Caco-2 (cell line): ENCODE measurements at regions of chr12 and their contacts with region 1.

Region 1: GRCh38 chr12:111953455-111953854 is 59.5 kb downstream of the TMEM116 start:
- DNase-seq: no peak
- H3K4me3 ChIP-seq: no peak overlapping the region
- H3K4me3 Mint-ChIP-seq: no peak overlapping the region
- H3K27ac Mint-ChIP-seq: no peak overlapping the region
- H3K4me1 ChIP-seq: no peaks in the 10 kb centered on the region
- H3K4me1 Mint-ChIP-seq: no peaks in the 10 kb centered on the region
- H3K27me3 ChIP-seq: no peaks in the 10 kb centered on the region
- H3K27me3 Mint-ChIP-seq: no peaks in the 10 kb centered on the region
- CTCF ChIP-seq: no peak

Region 2: DNA sequence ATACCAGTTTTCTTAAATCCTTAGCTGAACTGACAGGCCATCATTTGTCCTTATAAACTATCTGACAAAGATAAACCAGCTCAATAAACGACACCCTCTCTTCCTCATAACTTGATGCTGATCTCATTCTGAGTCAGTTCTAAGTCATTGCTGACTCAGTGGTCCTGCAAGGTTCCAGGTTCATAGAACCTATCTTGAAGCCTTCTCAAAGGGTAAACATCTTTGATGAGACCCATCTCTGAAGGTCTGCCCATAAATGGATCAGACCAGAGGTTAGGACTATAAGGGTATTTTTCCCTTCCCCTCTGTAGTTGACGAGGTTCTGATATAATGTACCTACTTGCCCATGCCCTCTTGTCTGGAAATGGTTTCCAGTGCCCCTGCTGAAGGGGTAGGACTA is 143.2 kb after region 1 on chr12:
- CTCF ChIA-PET with region 1: interaction called, 12 read pairs
- POLR2A ChIA-PET with region 1: no interaction called
- intact Hi-C with region 1: no loop called
- DNase-seq: no peak
- H3K4me3 ChIP-seq: no peak overlapping the region
- H3K4me3 Mint-ChIP-seq: no peak overlapping the region
- H3K27ac Mint-ChIP-seq: no peak overlapping the region
- H3K4me1 ChIP-seq: no peaks in the 10 kb centered on the region; the same call in 1 of the 2 replicates
- H3K4me1 Mint-ChIP-seq: no peaks in the 10 kb centered on the region
- H3K27me3 ChIP-seq: no peaks in the 10 kb centered on the region
- H3K27me3 Mint-ChIP-seq: no peaks in the 10 kb centered on the region
- CTCF ChIP-seq: no peak